ENCODE measurements at regions of chrX and their contacts with region 1.

Region 1: DNA sequence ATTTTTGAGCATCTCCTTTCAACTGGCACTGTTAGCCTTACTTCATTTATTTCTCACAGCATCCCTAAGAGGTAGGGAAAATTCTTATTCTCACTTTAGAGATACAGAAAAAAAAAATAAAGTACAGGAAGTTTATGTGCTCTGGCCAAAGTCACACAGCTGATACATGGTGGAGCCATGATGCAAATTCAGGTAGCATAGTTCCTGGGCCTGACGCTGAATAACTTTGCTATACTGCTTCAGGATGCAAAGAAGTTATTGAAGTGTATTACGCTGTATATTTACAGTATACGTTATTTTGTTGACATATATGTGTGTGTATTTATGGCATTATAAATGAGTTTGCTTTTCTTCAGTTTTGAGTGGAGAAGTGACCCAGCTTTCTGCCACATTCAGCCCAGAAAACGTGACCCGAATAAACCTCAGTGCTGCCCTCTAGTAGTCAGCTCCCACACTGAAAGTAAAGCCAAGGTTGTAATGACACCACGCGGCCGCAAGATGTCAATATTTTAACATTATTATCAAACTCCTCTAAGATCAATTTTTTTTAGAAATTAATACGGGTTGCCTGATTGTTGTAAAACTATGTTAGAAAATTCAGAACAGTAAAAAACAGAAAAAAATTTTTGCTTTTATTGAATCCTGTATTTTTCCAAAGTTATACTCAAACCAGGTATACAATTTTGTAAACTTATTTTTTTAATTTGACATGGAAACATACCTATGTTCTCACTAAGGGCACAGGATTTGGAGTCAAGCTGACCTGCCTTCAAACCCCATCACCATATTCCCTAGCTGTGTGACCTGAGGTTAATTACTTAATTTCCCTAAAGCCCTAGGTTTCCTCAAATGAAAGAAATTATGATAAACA is 3.8 kb upstream of the GUCY2F start:
- DNase-seq: peak; percentile 86
- H3K4me3 Mint-ChIP-seq: no peak overlapping the region
- H3K27ac Mint-ChIP-seq: no peak overlapping the region
- H3K4me1 Mint-ChIP-seq: no peaks in the 10 kb centered on the region
- H3K27me3 Mint-ChIP-seq: peaks cover 11% of the 10 kb centered on the region

Region 2: DNA sequence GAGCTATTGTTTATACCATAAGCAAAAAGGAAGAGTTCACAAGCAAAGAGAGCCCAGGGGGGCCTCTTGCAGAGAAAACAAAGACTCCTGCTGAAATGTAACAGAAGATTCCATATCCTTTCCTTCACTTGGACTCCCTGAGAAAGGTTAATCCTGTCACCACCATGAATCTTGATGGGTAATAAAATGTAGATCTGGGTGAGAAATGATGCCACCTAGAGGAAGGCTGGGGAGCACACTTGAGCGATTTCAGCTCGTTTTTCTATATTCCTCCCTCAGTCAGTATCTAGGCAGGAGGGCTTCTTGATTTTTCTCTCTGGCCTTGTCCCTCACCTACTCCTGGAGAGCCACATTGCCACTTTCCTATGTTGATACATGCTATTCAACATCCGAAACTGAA is 149.5 kb after region 1 on chrX:
- intact Hi-C with region 1: loop called (anchors 1 kb)
- DNase-seq: peak; percentile 53
- H3K4me3 Mint-ChIP-seq: no peak overlapping the region
- H3K27ac Mint-ChIP-seq: no peak overlapping the region
- H3K4me1 Mint-ChIP-seq: peaks cover 15% of the 10 kb centered on the region
- H3K27me3 Mint-ChIP-seq: no peaks in the 10 kb centered on the region

Region 3: DNA sequence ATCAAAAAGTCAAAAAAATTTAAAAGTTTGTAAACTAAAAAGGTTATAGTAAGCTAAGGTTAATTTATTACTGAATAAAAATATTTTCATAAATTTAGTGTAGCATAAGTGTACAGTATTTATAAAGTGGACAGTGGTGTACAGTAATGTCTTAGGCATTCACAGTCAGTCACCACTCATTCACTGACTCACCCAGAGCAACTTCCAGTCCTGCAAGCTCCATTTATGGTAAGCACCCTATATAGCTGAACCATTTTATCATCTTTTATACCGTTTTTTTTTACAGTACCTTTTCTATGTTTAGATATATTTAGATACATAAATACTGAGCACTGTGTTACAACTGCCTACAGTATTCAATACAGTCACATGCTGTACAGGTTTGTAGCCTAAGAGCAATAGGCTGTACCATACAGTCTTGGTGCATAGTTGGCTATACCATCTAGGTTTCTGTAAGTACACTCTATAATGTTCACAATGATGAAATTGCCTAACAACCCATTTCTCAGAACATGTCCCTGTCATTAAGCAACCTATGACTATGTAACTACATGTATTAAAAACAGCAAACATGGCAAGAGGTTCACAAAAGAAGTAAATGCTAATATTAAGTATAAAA is 228.7 kb after region 1 on chrX:
- intact Hi-C with region 1: loop called (anchors 10 kb)
- DNase-seq: no peak
- H3K4me3 Mint-ChIP-seq: no peak overlapping the region
- H3K27ac Mint-ChIP-seq: no peak overlapping the region
- H3K4me1 Mint-ChIP-seq: peaks cover 31% of the 10 kb centered on the region
- H3K27me3 Mint-ChIP-seq: no peaks in the 10 kb centered on the region

Region 4: DNA sequence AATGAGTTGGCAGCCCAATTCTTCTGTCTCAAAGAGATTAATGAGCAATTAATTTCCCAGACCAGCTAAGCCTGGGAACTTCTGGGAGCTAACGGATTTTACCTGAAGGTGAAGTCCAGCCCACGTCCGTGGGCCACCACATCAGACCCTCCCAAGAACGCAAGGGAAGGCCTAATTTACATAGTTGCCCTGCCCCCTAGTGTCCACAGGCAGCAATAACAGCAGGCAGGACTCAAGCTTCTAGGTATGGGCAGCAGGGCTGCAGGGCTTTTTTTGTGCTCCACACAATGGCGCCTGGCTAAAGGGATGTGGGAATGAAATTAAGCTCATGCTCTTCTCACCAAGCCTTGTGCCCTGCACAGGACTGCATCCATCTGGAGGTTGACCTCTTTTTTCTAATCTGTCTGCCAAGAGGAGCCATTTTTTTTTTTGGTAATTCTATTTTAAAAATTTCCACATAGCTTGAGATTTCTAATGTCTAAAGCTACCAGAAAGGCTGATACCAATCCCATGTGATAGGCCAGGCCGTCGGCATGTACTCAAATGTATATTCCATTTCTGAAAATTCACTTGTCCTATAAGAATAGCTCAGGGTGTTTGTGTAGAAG is 405.3 kb after region 1 on chrX:
- intact Hi-C with region 1: loop called (anchors 1 kb)
- DNase-seq: peak; percentile 81
- H3K4me3 Mint-ChIP-seq: no peak overlapping the region
- H3K27ac Mint-ChIP-seq: no peak overlapping the region
- H3K4me1 Mint-ChIP-seq: peaks cover 2% of the 10 kb centered on the region
- H3K27me3 Mint-ChIP-seq: peaks cover 7% of the 10 kb centered on the region